Naive thymus-derived CD4-positive, alpha-beta T cell (primary cell): ENCODE measurements at regions of chr20 and their contacts with region 1.

Region 1: DNA sequence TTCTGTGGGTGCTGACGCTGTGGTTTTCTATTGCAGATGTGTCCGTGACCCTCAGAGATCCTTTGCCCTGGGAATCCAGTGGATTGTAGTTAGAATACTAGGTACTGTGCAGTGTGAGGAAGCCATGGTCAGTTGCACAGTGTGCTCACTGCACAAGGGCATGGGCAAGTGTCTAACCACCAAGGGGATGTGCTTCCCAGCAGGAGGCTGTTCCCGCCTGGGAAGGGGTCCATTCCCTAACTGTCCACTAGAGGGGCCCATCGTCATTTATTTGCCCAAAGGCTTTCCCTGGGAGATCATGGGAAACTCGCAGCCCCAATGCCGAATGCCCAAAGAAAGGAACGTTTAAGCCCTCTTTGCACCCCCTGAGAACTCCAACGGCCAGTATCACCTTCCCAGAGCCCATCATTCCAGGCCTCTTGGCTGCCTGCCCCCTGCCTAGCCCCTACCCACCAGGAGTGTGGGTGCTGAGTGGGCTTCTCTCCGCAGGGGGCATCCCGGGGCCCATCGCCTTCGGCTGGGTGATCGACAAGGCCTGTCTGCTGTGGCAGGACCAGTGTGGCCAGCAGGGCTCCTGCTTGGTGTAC is 26.2 kb downstream of the SLCO4A1 start:
- DNase-seq: peak in 5 of 9 donors; percentile 10 to 32 (median 23)
- ATAC-seq: peak; percentile 59
- H3K4me3 ChIP-seq: no peak overlapping the region
- H3K4me3 Mint-ChIP-seq: no peak overlapping the region
- H3K27ac ChIP-seq: no peak overlapping the region
- H3K27ac Mint-ChIP-seq: peak overlapping the region in 1 of 9 donors; percentile 62
- H3K4me1 ChIP-seq: no peaks in the 10 kb centered on the region
- H3K4me1 Mint-ChIP-seq: peaks cover 0 to 2% (median 0%) of the 10 kb centered on the region in 7 donors
- H3K27me3 ChIP-seq: no peaks in the 10 kb centered on the region
- H3K27me3 Mint-ChIP-seq: no peaks in the 10 kb centered on the region

Region 2: GRCh38 chr20:62808211-62808865 is 139.8 kb after region 1 on chr20:
- CTCF ChIA-PET with region 1: interaction called, 22 read pairs
- POLR2A ChIA-PET with region 1: no interaction called
- intact Hi-C with region 1: no loop called
- DNase-seq: peak; percentile 58 to 84 (median 71)
- ATAC-seq: peak; percentile 70
- H3K4me3 ChIP-seq: no peak overlapping the region
- H3K4me3 Mint-ChIP-seq: peak overlapping the region in 9 of 10 donors; percentile 18 to 82 (median 57)
- H3K27ac ChIP-seq: peak overlapping the region; percentile 22
- H3K27ac Mint-ChIP-seq: peak overlapping the region in 7 of 9 donors; percentile 13 to 88 (median 65)
- H3K4me1 ChIP-seq: peaks cover 16 to 30% of the 10 kb centered on the region in 2 donors
- H3K4me1 Mint-ChIP-seq: peaks cover 16 to 33% (median 25%) of the 10 kb centered on the region in 7 donors
- H3K27me3 ChIP-seq: no peaks in the 10 kb centered on the region
- H3K27me3 Mint-ChIP-seq: no peaks in the 10 kb centered on the region